Activated CD4-positive, alpha-beta memory T cell treated with anti-CD3 and anti-CD28 coated beads for 36 hours (primary cell): ENCODE measurements at regions of chr18 and their contacts with region 1.

Region 1: DNA sequence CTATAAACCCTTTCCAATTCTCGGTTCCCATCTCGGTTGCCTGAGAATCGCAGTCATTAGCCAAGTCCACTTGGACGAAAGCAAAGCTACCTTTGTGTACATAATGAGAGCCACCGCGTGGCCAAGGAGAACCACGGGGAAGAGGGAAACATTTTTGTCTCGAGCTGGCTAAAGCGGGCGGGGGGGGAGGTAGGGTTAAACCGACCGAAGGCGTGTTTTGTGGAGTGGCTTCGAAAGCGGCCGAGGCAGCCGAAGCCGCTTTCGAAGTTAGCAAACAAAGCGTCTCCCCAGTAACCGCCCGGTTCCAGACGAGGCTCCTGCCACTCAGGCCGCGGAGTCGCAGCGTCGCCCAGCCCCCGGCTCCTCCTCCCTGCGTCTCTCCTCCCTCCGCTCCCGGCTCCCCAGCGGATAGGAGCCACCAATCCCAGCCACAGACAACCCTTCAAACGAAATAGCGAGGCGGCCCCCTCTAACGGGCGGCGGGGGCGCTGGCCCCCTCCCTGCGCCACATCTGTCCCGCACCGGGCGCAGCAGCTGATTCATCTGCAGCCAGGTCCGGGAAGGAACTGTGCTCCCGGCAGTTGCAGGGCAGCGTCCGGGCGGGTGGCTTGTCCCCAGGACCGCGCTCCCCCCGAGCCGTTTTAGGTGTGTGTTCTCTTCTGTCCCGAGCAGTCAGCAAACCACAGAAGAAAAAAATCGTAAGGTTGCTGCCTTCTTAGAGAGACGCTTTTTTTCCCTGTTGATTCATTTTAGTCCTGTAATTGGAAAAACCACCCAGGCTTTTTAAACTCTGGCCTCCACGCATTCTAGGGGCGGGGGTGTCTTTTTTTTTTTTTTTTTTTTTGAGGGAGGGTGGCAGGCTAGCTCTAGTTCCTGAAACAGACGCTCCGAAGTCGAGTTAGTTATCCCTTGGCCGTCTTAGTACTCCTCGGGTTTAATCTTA is 1.8 kb upstream of the TGIF1 start:
- DNase-seq: peak; percentile 93
- H3K4me3 Mint-ChIP-seq: peak overlapping the region; percentile 86
- H3K27ac Mint-ChIP-seq: peak overlapping the region; percentile 93
- H3K4me1 Mint-ChIP-seq: peaks cover 25% of the 10 kb centered on the region
- H3K27me3 Mint-ChIP-seq: no peaks in the 10 kb centered on the region

Region 2: DNA sequence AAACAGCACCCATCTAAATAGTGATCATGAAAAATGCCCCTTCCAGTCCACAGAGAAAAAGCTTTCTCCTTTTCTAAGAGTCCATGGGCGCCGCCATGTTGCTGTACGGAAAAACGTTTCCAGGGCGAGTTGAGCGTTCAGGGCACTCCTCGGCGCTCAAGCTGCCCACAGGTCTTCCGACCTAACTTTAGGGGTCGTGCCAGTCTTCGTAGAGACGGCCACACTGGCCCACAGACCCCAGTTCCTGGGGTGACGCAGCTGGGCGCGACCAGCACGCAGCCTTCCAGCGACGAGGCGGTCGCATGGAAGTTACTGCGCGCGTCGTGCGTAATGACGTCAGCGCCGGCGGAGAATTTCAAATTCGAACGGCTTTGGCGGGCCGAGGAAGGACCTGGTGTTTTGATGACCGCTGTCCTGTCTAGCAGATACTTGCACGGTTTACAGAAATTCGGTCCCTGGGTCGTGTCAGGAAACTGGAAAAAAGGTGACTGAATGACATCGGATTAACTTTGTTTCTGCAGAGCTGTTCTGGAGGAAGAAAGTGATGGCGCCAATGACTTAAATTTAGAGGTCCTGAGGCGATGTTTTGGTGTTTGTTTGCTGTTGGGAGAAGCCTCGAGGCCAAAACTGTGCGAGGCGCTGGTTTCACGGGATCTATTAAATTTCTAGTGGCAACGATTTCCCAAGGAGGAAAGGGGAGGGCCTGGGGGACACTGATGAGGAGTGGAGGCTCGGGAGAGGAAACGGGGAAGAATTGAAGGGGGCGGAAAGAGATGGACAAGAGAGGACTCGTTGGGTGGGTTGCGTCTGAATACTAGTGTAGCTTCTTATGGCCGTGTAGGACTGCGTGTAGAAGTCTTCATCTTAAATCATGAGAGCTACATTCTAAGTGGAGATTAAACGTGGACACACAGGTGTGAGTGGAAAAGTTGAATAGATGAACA is 876.7 kb before region 1 on chr18 and contains the starts of genes METTL4 and NDC80:
- CTCF ChIA-PET with region 1: no interaction called
- POLR2A ChIA-PET with region 1: no interaction called
- intact Hi-C with region 1: loop called (anchors 5 kb)
- DNase-seq: peak; percentile 90
- H3K4me3 Mint-ChIP-seq: peak within 1 kb of the TSS; percentile 96
- H3K27ac Mint-ChIP-seq: peak within 1 kb of the TSS; percentile 95
- H3K4me1 Mint-ChIP-seq: peaks cover 51% of the 10 kb centered on the region
- H3K27me3 Mint-ChIP-seq: no peaks in the 10 kb centered on the region
- total RNA-seq, gene METTL4: 19.6 to 23.0 TPM
- total RNA-seq, gene NDC80: 79.3 to 83.1 TPM

Region 3: GRCh38 chr18:3062798-3063680 is 385.1 kb before region 1 on chr18:
- CTCF ChIA-PET with region 1: no interaction called
- POLR2A ChIA-PET with region 1: no interaction called
- intact Hi-C with region 1: loop called (anchors 1 kb)
- DNase-seq: peak; percentile 86
- H3K4me3 Mint-ChIP-seq: peak overlapping the region; percentile 55
- H3K27ac Mint-ChIP-seq: peak overlapping the region; percentile 73
- H3K4me1 Mint-ChIP-seq: peaks cover 68% of the 10 kb centered on the region
- H3K27me3 Mint-ChIP-seq: no peaks in the 10 kb centered on the region

Region 4: DNA sequence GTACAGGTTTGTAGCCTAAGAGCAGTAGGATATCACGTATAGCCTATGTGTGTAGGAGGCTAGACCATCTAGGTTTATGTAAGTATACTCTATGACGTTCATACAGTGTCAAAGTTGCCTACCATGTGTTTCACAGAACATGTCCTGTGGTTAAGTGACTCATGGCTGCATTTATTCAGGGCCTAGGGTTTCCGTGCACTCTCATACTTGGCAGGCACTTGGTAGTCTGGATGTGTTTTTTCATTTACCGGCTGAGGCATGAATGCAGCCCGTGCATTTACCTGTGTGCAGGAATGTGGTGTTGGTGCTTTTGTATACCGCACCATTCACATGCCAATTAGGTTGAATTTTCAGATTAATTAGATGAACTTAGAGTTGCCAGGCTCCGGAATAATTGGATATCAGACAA is 142.8 kb before region 1 on chr18:
- CTCF ChIA-PET with region 1: interaction called, 3 read pairs
- POLR2A ChIA-PET with region 1: no interaction called
- intact Hi-C with region 1: loop called (anchors 2 kb)
- DNase-seq: peak; percentile 77
- H3K4me3 Mint-ChIP-seq: no peak overlapping the region
- H3K27ac Mint-ChIP-seq: peak overlapping the region; percentile 80
- H3K4me1 Mint-ChIP-seq: peaks cover 21% of the 10 kb centered on the region
- H3K27me3 Mint-ChIP-seq: peaks cover 15% of the 10 kb centered on the region

Region 5: DNA sequence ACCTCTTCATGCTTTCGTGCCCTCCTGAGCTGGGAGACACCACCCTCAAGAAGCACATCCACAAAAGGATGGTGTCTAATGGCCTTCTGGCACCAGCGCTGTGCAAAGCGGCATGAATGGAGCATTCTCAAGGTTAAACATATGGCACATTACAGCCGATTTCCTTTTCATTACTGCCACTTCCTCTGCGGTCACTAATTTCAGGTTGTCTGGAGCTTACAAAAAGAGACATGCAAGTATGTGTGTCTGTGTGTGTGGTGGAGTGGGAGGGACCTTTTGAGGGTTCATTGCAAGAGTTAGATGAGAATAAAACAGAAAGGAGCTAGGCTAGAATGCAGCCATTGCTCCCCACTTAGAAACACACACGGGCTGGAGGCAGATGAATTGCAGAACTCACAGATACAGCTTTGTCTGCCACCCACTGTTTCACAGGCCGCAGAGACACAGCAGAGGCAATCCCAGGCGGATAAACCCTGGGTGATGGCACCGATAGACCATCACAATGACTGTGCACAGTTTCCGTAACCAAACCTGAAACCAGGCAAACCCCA is 77.8 kb after region 1 on chr18:
- CTCF ChIA-PET with region 1: no interaction called
- POLR2A ChIA-PET with region 1: no interaction called
- intact Hi-C with region 1: loop called (anchors 2 kb)
- DNase-seq: peak; percentile 71
- H3K4me3 Mint-ChIP-seq: peak overlapping the region; percentile 11
- H3K27ac Mint-ChIP-seq: peak overlapping the region; percentile 8
- H3K4me1 Mint-ChIP-seq: peaks cover 17% of the 10 kb centered on the region
- H3K27me3 Mint-ChIP-seq: no peaks in the 10 kb centered on the region

Region 6: GRCh38 chr18:3604498-3605408 is 156.6 kb after region 1 on chr18:
- CTCF ChIA-PET with region 1: interaction called, 3 read pairs
- POLR2A ChIA-PET with region 1: interaction called, 12 read pairs
- intact Hi-C with region 1: no loop called
- DNase-seq: peak; percentile 58
- H3K4me3 Mint-ChIP-seq: no peak overlapping the region
- H3K27ac Mint-ChIP-seq: no peak overlapping the region
- H3K4me1 Mint-ChIP-seq: peaks cover 15% of the 10 kb centered on the region
- H3K27me3 Mint-ChIP-seq: no peaks in the 10 kb centered on the region

Region 7: GRCh38 chr18:5295981-5296705 is 1848.0 kb after region 1 on chr18:
- CTCF ChIA-PET with region 1: no interaction called
- POLR2A ChIA-PET with region 1: interaction called, 5 read pairs
- intact Hi-C with region 1: loop called (anchors 10 kb)
- DNase-seq: peak; percentile 97
- H3K4me3 Mint-ChIP-seq: peak overlapping the region; percentile 94
- H3K27ac Mint-ChIP-seq: peak overlapping the region; percentile 97
- H3K4me1 Mint-ChIP-seq: peaks cover 23% of the 10 kb centered on the region
- H3K27me3 Mint-ChIP-seq: no peaks in the 10 kb centered on the region